Right lobe of liver (tissue), 6 donors: ENCODE measurements at regions of chr22 and their contacts with region 1.

Region 1: DNA sequence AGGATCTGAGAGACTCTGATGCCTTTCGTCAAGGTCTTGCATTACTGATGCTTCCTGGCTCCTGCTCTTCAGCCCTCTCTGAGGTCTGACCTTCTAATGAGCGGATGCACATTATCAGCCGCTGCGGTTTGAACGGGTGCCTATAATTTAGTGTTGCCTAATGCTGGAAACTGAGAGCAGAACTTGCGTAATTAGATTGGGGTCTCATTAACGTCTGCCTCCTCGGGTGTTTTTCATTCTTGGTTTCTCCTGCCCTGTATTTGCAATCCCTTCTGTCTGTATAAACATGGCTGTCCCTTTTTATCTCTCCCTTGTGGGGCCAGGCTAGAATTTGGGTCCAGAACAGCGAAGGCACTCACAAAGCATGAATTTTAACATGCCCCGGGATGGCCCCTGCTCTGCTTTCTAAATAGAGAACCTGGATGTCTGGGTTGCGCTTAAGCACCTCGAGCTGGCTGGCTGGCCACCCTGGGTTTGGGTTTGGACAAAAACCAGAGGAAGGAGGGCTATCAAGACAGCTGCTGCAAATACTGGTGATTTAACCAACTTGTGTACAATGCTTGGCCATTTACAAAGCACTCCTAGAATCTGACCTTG is 118.6 kb downstream of the TIMP3 start:
- DNase-seq: peak in 1 of 3 donors; percentile 48
- ATAC-seq: peak; percentile 51 to 87 (median 63)
- H3K4me3 ChIP-seq: no peak overlapping the region
- H3K27ac ChIP-seq: no peak overlapping the region
- H3K4me1 ChIP-seq: no peaks in the 10 kb centered on the region
- H3K27me3 ChIP-seq: no peaks in the 10 kb centered on the region
- CTCF ChIP-seq: no peak
- POLR2A ChIP-seq: no peak

Region 2: GRCh38 chr22:32803020-32803754 is 116.9 kb before region 1 on chr22:
- intact Hi-C with region 1: no loop called
- DNase-seq: peak in 2 of 3 donors; percentile 36 to 64
- ATAC-seq: peak; percentile 7 to 16 (median 12)
- H3K4me3 ChIP-seq: peak overlapping the region; percentile 66 to 79 (median 71)
- H3K27ac ChIP-seq: peak overlapping the region in 2 of 3 donors; percentile 31 to 81
- H3K4me1 ChIP-seq: peaks cover 0 to 23% (median 10%) of the 10 kb centered on the region in 4 donors
- H3K27me3 ChIP-seq: no peaks in the 10 kb centered on the region
- CTCF ChIP-seq: no peak
- POLR2A ChIP-seq: no peak

Region 3: DNA sequence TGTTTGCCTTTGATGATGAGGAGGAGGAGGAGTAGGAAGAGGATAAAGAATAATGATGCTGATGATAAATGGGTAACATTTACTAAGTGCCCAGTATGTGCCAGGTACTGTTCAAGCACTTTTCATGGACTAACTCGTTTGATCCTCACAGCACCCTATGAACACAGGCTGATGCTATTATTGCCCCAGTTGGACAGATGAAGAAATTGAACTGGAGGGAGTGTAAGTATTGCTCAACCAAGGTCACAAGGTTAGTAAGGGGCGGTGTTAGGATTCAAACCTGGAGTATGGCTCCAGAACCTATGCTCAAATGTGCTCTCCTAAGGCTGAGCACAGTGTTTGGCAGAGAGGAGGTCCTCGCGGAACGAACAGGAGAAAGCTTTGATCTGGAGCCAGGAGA is 59.5 kb after region 1 on chr22:
- intact Hi-C with region 1: loop called in 1 of 2 experiments (anchors 5 kb)
- DNase-seq: peak in 1 of 3 donors; percentile 68
- ATAC-seq: peak; percentile 98 to 99 (median 99)
- H3K4me3 ChIP-seq: no peak overlapping the region
- H3K27ac ChIP-seq: peak overlapping the region in 1 of 3 donors; percentile 45
- H3K4me1 ChIP-seq: peaks cover 0 to 10% (median 0%) of the 10 kb centered on the region in 4 donors
- H3K27me3 ChIP-seq: no peaks in the 10 kb centered on the region
- CTCF ChIP-seq: no peak
- POLR2A ChIP-seq: no peak

Region 4: GRCh38 chr22:32985899-32986765 is 66.0 kb after region 1 on chr22:
- intact Hi-C with region 1: loop called (anchors 5 kb)
- DNase-seq: peak; percentile 37 to 80 (median 62)
- ATAC-seq: peak; percentile 100
- H3K4me3 ChIP-seq: no peak overlapping the region
- H3K27ac ChIP-seq: no peak overlapping the region
- H3K4me1 ChIP-seq: no peaks in the 10 kb centered on the region
- H3K27me3 ChIP-seq: no peaks in the 10 kb centered on the region
- CTCF ChIP-seq: peak; percentile 90 to 93 (median 91)
- POLR2A ChIP-seq: no peak